CD14-positive monocyte (primary cell): ENCODE measurements at regions of chr2 and their contacts with region 1.

Region 1: GRCh38 chr2:172226244-172227061 is 123.8 kb upstream of the DLX2 start:
- DNase-seq: peak; percentile 32 to 54 (median 47)
- H3K4me3 ChIP-seq: no peak overlapping the region
- H3K4me3 Mint-ChIP-seq: no peak overlapping the region
- H3K27ac ChIP-seq: no peak overlapping the region
- H3K27ac Mint-ChIP-seq: no peak overlapping the region
- H3K4me1 ChIP-seq: no peaks in the 10 kb centered on the region
- H3K4me1 Mint-ChIP-seq: peaks cover 18% of the 10 kb centered on the region
- H3K27me3 ChIP-seq: no peaks in the 10 kb centered on the region
- H3K27me3 Mint-ChIP-seq: peaks cover 0 to 3% (median 2%) of the 10 kb centered on the region in 3 donors
- CTCF ChIP-seq: peak; percentile 40

Region 2: GRCh38 chr2:172172513-172173173 is 53.8 kb before region 1 on chr2:
- intact Hi-C with region 1: loop called (anchors 5 kb)
- DNase-seq: peak; percentile 44 to 64 (median 54)
- H3K4me3 ChIP-seq: peak overlapping the region; percentile 73 to 88 (median 79)
- H3K4me3 Mint-ChIP-seq: peak overlapping the region; percentile 76 to 78
- H3K27ac ChIP-seq: no peak overlapping the region
- H3K27ac Mint-ChIP-seq: peak overlapping the region in 1 of 7 donors; percentile 66
- H3K4me1 ChIP-seq: peaks cover 5 to 6% of the 10 kb centered on the region in 2 donors
- H3K4me1 Mint-ChIP-seq: peaks cover 24% of the 10 kb centered on the region
- H3K27me3 ChIP-seq: peaks cover 0 to 8% of the 10 kb centered on the region in 2 donors
- H3K27me3 Mint-ChIP-seq: peaks cover 0 to 7% (median 3%) of the 10 kb centered on the region in 3 donors
- CTCF ChIP-seq: peak; percentile 92